PC-9 (cell line): ENCODE measurements at regions of chr18 and their contacts with region 1.

Region 1: DNA sequence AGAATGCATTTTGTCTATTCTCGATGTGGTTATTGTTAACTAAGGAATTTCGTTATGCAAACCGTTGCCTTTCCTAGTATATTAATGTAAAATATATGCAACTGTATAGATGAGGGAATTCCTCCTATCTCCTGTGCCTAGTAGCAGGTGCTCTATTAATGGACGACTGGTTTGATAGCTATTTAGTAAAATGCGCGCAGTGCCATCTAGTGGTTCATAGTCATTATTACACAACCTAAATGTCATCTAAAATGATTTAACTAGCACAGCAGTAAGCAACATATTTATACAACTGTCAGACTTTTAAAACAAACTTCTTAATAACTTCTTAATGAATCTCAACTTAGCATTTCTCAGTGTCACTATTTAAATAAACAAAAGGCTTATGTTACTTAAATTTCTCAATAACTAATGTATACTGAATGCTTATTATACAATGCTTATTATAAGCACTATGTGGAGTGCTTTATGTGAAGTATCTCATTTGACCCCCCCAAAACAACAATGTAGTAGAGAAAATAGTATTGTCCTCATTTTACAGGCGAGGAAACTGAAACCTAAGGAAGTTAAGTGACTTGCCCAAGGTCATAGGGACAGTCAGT is 77.9 kb downstream of the DTNA start:
- DNase-seq: no peak
- H3K4me3 ChIP-seq: no peak overlapping the region
- H3K27ac ChIP-seq: no peak overlapping the region
- H3K4me1 ChIP-seq: no peaks in the 10 kb centered on the region
- H3K27me3 ChIP-seq: no peaks in the 10 kb centered on the region
- CTCF ChIP-seq: peak; percentile 76

Region 2: DNA sequence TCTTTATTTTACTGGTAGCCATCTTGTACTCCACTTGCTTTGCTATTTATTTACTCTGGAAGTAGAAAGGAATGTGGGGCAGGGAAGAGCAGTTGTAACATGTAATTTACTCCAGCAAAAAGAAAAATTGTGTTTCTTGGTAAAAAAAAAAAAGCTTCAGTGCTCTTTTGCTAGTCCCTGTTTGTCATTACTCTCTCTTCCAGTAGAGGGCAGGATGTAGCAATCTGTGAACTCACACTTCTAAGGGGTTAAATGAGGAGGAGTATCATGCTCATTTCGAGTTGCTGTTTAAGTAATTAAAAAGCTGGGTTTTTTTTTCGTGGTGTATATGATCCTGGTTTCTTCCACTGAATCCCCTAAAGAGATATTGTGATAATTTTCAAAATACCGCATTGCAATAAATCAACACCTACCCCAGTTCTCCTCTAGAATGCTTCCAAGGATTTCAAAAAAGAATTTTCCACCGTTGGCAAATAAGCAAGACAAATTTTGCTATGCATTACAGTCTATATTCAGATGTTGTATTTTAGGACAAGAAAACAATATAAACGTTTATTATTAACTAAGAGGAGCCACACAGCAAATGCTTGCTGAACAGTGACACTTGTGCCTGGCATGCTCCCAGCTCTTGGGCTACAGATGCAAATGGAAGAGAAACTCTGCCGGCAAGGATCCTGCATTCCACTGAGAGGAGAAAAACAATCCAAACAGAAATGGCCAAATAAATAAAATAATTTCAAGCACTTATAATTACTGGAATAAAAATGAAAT is 948.4 kb before region 1 on chr18:
- CTCF ChIA-PET with region 1: no interaction called
- POLR2A ChIA-PET with region 1: no interaction called
- intact Hi-C with region 1: loop called (anchors 5 kb)
- DNase-seq: no peak
- H3K4me3 ChIP-seq: no peak overlapping the region
- H3K27ac ChIP-seq: no peak overlapping the region
- H3K4me1 ChIP-seq: no peaks in the 10 kb centered on the region
- H3K27me3 ChIP-seq: no peaks in the 10 kb centered on the region
- CTCF ChIP-seq: peak; percentile 65

Region 3: GRCh38 chr18:34661464-34662111 is 126.4 kb before region 1 on chr18:
- CTCF ChIA-PET with region 1: interaction called, 5 read pairs
- POLR2A ChIA-PET with region 1: no interaction called
- intact Hi-C with region 1: loop called (anchors 1 kb)
- DNase-seq: no peak
- H3K4me3 ChIP-seq: no peak overlapping the region
- H3K27ac ChIP-seq: no peak overlapping the region
- H3K4me1 ChIP-seq: peaks cover 5% of the 10 kb centered on the region
- H3K27me3 ChIP-seq: no peaks in the 10 kb centered on the region
- CTCF ChIP-seq: peak; percentile 77